MCF 10A (cell line): ENCODE measurements at regions of chrX and their contacts with region 1.

Region 1: DNA sequence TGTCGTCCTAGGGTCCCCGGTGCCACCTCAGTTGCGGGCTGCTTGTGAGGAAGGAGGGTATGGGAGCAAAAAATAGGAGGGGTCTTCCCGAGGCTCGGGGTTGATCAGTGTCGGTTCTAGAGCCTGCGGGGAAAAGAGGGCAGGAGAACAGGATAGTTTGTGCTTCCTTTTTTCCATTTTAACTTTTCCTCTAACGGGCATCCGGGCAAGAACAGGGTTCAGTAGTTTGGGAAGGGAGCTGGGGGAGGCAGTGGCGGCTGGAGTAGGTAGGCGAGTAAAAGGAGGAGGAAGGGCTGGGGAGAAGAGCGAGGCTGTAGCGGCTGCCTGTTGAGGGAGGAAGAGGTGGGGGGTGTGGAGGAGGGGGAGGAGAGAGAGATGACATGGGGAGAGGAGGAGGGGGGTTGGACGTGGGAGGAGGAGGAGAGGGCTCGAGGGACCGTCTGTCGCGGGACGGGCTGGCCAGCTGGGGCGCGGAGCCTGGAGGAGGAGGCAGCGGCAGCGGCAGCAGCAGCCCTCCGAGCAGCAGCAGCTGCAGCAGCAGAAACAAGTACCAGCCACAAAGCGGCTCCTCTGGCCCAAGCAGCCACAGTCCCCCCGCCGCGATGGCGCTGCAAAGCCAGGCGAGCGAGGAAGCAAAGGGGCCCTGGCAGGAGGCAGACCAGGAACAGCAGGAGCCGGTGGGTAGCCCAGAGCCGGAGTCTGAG is at the start of gene SLC16A2:
- DNase-seq: peak; percentile 69
- H3K4me3 Mint-ChIP-seq: peak within 1 kb of the TSS; percentile 89
- H3K27ac Mint-ChIP-seq: peak within 1 kb of the TSS; percentile 56
- H3K4me1 Mint-ChIP-seq: no peaks in the 10 kb centered on the region
- H3K27me3 Mint-ChIP-seq: peaks cover 11% of the 10 kb centered on the region
- CTCF ChIP-seq: no peak
- total RNA-seq, gene SLC16A2: 11.9 and 13.7 TPM in 2 replicates

Region 2: GRCh38 chrX:74291964-74292807 is 129.0 kb before region 1 on chrX:
- CTCF ChIA-PET with region 1: no interaction called
- POLR2A ChIA-PET with region 1: interaction called, 10 read pairs
- intact Hi-C with region 1: no loop called
- DNase-seq: peak; percentile 87
- H3K4me3 Mint-ChIP-seq: peak overlapping the region; percentile 79
- H3K27ac Mint-ChIP-seq: peak overlapping the region; percentile 63
- H3K4me1 Mint-ChIP-seq: no peaks in the 10 kb centered on the region
- H3K27me3 Mint-ChIP-seq: no peaks in the 10 kb centered on the region
- CTCF ChIP-seq: no peak

Region 3: GRCh38 chrX:74351760-74352159 is 69.4 kb before region 1 on chrX:
- CTCF ChIA-PET with region 1: no interaction called
- POLR2A ChIA-PET with region 1: no interaction called
- intact Hi-C with region 1: no loop called
- DNase-seq: no peak
- H3K4me3 Mint-ChIP-seq: no peak overlapping the region
- H3K27ac Mint-ChIP-seq: no peak overlapping the region
- H3K4me1 Mint-ChIP-seq: peaks cover 6% of the 10 kb centered on the region
- H3K27me3 Mint-ChIP-seq: peaks cover 35% of the 10 kb centered on the region
- CTCF ChIP-seq: no peak

Region 4: GRCh38 chrX:74450803-74451449 is 29.7 kb after region 1 on chrX:
- CTCF ChIA-PET with region 1: interaction called, 3 read pairs
- POLR2A ChIA-PET with region 1: interaction called, 51 read pairs
- intact Hi-C with region 1: loop called (anchors 1 kb)
- DNase-seq: peak; percentile 87
- H3K4me3 Mint-ChIP-seq: no peak overlapping the region
- H3K27ac Mint-ChIP-seq: peak overlapping the region; percentile 64
- H3K4me1 Mint-ChIP-seq: peaks cover 18% of the 10 kb centered on the region
- H3K27me3 Mint-ChIP-seq: peaks cover 30% of the 10 kb centered on the region
- CTCF ChIP-seq: no peak

Region 5: GRCh38 chrX:74458735-74459134 is 37.5 kb after region 1 on chrX:
- CTCF ChIA-PET with region 1: no interaction called
- POLR2A ChIA-PET with region 1: interaction called, 3 read pairs
- intact Hi-C with region 1: loop called (anchors 2 kb)
- DNase-seq: peak; percentile 74
- H3K4me3 Mint-ChIP-seq: no peak overlapping the region
- H3K27ac Mint-ChIP-seq: no peak overlapping the region
- H3K4me1 Mint-ChIP-seq: peaks cover 6% of the 10 kb centered on the region
- H3K27me3 Mint-ChIP-seq: peaks cover 39% of the 10 kb centered on the region
- CTCF ChIP-seq: peak; percentile 19

Region 6: GRCh38 chrX:74536152-74536831 is 115.1 kb after region 1 on chrX:
- CTCF ChIA-PET with region 1: interaction called, 3 read pairs
- POLR2A ChIA-PET with region 1: interaction called, 12 read pairs
- intact Hi-C with region 1: loop called (anchors 10 kb)
- DNase-seq: peak; percentile 77
- H3K4me3 Mint-ChIP-seq: peak overlapping the region; percentile 69
- H3K27ac Mint-ChIP-seq: peak overlapping the region; percentile 35
- H3K4me1 Mint-ChIP-seq: peaks cover 13% of the 10 kb centered on the region
- H3K27me3 Mint-ChIP-seq: peaks cover 42% of the 10 kb centered on the region
- CTCF ChIP-seq: peak; percentile 29